Calu3 (cell line): ENCODE measurements at regions of chr15 and their contacts with region 1.

Region 1: GRCh38 chr15:57505949-57506391 is 85.7 kb upstream of the MYZAP start:
- DNase-seq: peak; percentile 95
- H3K4me3 Mint-ChIP-seq: peak overlapping the region; percentile 48
- H3K27ac Mint-ChIP-seq: peak overlapping the region; percentile 100
- H3K4me1 Mint-ChIP-seq: peaks cover 65% of the 10 kb centered on the region
- H3K27me3 Mint-ChIP-seq: no peaks in the 10 kb centered on the region
- CTCF ChIP-seq: no peak

Region 2: GRCh38 chr15:57340682-57341259 is 165.2 kb before region 1 on chr15:
- CTCF ChIA-PET with region 1: interaction called, 16 read pairs
- intact Hi-C with region 1: no loop called
- DNase-seq: peak; percentile 76
- H3K4me3 Mint-ChIP-seq: no peak overlapping the region
- H3K27ac Mint-ChIP-seq: no peak overlapping the region
- H3K4me1 Mint-ChIP-seq: peaks cover 25% of the 10 kb centered on the region
- H3K27me3 Mint-ChIP-seq: no peaks in the 10 kb centered on the region
- CTCF ChIP-seq: peak; percentile 86

Region 3: GRCh38 chr15:57375827-57376695 is 129.9 kb before region 1 on chr15 and contains the start of gene CGNL1:
- CTCF ChIA-PET with region 1: interaction called, 14 read pairs
- intact Hi-C with region 1: loop called (anchors 5 kb)
- DNase-seq: peak; percentile 61
- H3K4me3 Mint-ChIP-seq: peak within 1 kb of the TSS; percentile 71
- H3K27ac Mint-ChIP-seq: peak within 1 kb of the TSS; percentile 45
- H3K4me1 Mint-ChIP-seq: peaks cover 10% of the 10 kb centered on the region
- H3K27me3 Mint-ChIP-seq: peaks cover 39% of the 10 kb centered on the region
- CTCF ChIP-seq: no peak
- total RNA-seq, gene CGNL1: 1.8 and 3.3 TPM in 2 replicates

Region 4: GRCh38 chr15:57485869-57486268 is 20.1 kb before region 1 on chr15:
- CTCF ChIA-PET with region 1: interaction called, 14 read pairs
- intact Hi-C with region 1: no loop called
- DNase-seq: peak; percentile 88
- H3K4me3 Mint-ChIP-seq: peak overlapping the region; percentile 29
- H3K27ac Mint-ChIP-seq: peak overlapping the region; percentile 87
- H3K4me1 Mint-ChIP-seq: peaks cover 26% of the 10 kb centered on the region
- H3K27me3 Mint-ChIP-seq: no peaks in the 10 kb centered on the region
- CTCF ChIP-seq: no peak

Region 5: DNA sequence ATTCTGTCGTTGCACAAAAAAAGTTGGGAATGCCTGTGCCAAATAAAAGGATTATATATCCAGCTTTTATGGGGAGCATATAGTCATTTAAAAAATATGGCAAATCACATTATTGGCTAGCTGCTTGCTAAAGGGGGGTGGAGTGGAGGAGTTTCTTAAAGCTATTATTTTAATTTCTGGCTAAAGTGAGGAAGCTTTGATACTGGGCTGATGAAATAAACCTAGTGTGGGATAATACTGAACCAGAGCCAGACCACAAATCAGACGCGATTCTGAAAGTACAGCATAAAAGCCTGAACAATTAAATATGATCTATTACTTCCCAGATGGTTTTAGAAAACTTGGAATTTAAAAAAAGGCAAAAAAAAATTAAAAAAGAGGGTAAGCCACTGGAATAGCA is 214.9 kb after region 1 on chr15:
- CTCF ChIA-PET with region 1: no interaction called
- intact Hi-C with region 1: no loop called
- DNase-seq: no peak
- H3K4me3 Mint-ChIP-seq: no peak overlapping the region
- H3K27ac Mint-ChIP-seq: no peak overlapping the region
- H3K4me1 Mint-ChIP-seq: no peaks in the 10 kb centered on the region
- H3K27me3 Mint-ChIP-seq: no peaks in the 10 kb centered on the region
- CTCF ChIP-seq: no peak